ENCODE measurements at regions of chr4 and their contacts with region 1.

Region 1: GRCh38 chr4:18021722-18022571 is at the start of gene LCORL:
- DNase-seq: peak; percentile 97
- total RNA-seq, gene LCORL: 9.3 to 12.0 TPM

Region 2: DNA sequence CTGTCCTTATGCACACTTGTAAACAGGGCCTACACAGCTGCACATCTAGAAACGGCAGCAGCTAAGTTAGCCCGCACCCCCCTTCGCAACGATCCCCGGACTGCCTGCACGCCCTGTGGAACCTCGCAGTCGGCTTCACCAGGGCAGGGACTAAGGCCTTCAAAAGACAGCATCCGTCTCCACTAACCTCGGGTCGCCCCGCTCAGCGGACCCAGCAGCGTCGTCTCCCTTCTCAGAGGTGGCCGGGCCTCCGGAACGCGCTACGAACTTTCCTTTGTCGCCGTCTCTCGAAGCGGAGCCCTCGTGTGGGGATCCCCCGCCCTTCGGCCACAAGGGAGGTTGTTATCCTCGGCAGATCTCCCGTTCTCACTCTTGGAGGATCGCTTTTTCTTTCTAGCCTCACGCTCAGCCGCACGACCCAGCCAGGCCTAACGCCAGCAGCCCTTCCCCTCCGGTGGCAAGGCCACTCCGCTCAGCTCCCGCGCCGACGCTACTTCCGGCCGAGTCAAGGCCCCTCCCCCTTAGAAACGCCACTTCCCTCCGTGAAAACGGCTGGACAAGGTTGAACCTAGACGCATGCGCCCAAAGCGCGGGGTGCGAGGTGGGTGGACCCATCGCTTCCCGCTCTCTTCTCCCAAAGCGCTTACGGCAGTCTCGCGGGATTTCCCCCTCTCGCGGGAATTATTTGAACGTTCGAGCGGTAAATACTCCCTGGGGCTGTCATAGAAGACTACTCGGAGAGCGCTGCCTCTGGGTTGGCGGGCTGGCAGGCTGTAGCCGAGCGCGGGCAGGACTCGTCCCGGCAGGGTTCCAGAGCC is 211.5 kb before region 1 on chr4 and contains the starts of genes DCAF16 and NCAPG:
- intact Hi-C with region 1: loop called in 1 of 2 experiments (anchors 10 kb)
- DNase-seq: peak; percentile 100
- total RNA-seq, gene DCAF16: 25.1 to 25.9 TPM
- total RNA-seq, gene NCAPG: 0.10 to 0.74 TPM